ENCODE measurements at regions of chrX and their contacts with region 1.

Region 1: DNA sequence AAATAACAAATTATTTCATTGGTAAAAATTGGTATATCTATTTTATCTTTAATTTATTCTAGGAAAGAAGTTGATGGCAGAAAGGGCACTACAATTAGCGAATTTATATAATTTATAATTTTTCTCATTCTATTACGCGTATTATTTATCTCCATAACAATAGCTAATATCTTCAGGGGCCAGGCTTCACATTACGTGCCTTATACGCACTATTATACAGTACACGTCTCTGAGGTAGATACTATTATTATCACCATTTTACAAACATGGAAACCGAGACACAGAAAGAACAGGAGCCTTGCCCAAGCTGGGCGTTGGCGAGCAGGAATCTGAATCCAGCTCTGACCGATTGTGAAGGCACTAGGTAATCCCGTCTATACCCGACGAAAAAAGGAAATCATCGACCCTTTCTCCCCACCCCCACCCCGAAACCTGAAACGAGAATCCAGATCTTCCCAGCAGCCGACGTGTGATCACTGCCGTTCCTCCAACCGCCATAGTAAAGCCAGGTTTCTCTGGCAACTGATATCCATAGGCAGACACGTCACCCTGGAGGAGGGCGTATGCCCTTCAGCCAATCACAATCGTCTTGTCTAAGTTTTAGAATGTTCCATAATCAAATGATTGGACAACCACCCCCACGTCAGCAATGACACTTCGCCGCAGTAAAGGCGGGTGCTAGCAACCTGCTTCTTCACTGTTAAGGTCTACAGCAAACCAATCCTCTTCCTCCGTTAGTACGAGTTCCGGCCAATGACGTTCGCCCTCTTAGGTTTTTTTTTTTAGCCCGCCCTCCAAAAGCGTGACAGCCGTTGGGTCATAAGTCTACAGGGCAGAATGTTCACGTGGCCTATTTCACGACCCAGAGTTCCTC is at the start of gene MORF4L2:
- DNase-seq: peak; percentile 91 to 96
- H3K4me3 ChIP-seq: peak within 1 kb of the TSS; percentile 63
- H3K4me3 Mint-ChIP-seq: no peak within 1 kb of the TSS
- H3K27ac Mint-ChIP-seq: no peak within 1 kb of the TSS
- H3K4me1 ChIP-seq: no peaks in the 10 kb centered on the region
- H3K4me1 Mint-ChIP-seq: no peaks in the 10 kb centered on the region
- H3K27me3 ChIP-seq: no peaks in the 10 kb centered on the region
- H3K27me3 Mint-ChIP-seq: no peaks in the 10 kb centered on the region
- CTCF ChIP-seq: no peak
- total RNA-seq, gene MORF4L2: 314 and 322 TPM in 2 replicates

Region 2: GRCh38 chrX:103431316-103431715 is 255.1 kb before region 1 on chrX:
- CTCF ChIA-PET with region 1: no interaction called
- POLR2A ChIA-PET with region 1: no interaction called
- intact Hi-C with region 1: no loop called
- DNase-seq: no peak
- H3K4me3 ChIP-seq: no peak overlapping the region
- H3K4me3 Mint-ChIP-seq: no peak overlapping the region
- H3K27ac Mint-ChIP-seq: no peak overlapping the region
- H3K4me1 ChIP-seq: peaks cover 6% of the 10 kb centered on the region; the same call in 1 of the 2 replicates
- H3K4me1 Mint-ChIP-seq: peaks cover 13% of the 10 kb centered on the region
- H3K27me3 ChIP-seq: no peaks in the 10 kb centered on the region
- H3K27me3 Mint-ChIP-seq: no peaks in the 10 kb centered on the region
- CTCF ChIP-seq: no peak

Region 3: GRCh38 chrX:103533511-103534216 is 152.8 kb before region 1 on chrX:
- CTCF ChIA-PET with region 1: no interaction called
- POLR2A ChIA-PET with region 1: interaction called, 4 read pairs
- intact Hi-C with region 1: loop called (anchors 1 kb)
- DNase-seq: peak; percentile 67 to 72
- H3K4me3 ChIP-seq: peak overlapping the region; percentile 11
- H3K4me3 Mint-ChIP-seq: peak overlapping the region; percentile 68
- H3K27ac Mint-ChIP-seq: no peak overlapping the region
- H3K4me1 ChIP-seq: no peaks in the 10 kb centered on the region
- H3K4me1 Mint-ChIP-seq: no peaks in the 10 kb centered on the region
- H3K27me3 ChIP-seq: no peaks in the 10 kb centered on the region
- H3K27me3 Mint-ChIP-seq: no peaks in the 10 kb centered on the region
- CTCF ChIP-seq: peak; percentile 66 to 74

Region 4: DNA sequence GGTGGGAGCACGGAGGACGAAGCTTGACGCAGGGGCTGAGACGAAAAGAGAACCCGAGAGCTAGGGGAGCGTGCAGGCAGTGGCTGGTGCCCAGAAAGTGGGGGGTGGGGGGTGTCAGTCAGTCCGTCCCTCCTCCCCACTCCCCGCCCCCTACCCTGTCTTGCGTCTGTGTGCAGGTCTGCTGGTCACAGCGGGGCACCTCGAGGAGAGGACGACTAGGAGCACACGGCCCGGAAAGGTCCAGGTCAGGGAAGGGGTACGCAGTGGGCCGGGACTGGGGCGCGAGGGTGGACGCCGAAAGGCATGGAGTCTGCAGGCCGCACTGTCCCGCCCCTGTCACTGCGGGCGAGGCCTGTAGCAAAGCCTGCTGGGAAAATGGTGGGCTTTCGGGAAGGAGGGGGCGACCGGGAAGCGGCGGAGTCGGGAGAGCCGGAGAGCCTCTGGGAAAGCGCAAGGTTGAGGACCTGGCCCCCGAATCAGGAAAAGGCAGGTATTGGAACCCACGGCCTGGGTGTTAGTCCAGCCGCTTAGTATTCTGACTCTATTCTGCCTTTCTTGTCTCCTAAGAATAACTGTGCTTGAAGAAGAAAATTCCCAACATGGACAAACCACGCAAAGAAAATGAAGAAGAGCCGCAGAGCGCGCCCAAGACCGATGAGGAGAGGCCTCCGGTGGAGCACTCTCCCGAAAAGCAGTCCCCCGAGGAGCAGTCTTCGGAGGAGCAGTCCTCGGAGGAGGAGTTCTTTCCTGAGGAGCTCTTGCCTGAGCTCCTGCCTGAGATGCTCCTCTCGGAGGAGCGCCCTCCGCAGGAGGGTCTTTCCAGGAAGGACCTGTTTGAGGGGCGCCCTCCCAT is 56.9 kb before region 1 on chrX:
- CTCF ChIA-PET with region 1: interaction called, 3 read pairs
- POLR2A ChIA-PET with region 1: interaction called, 17 read pairs
- intact Hi-C with region 1: loop called (anchors 2 kb)
- DNase-seq: peak; percentile 69 to 71
- H3K4me3 ChIP-seq: peak overlapping the region; percentile 75
- H3K4me3 Mint-ChIP-seq: peak overlapping the region; percentile 92
- H3K27ac Mint-ChIP-seq: peak overlapping the region; percentile 84
- H3K4me1 ChIP-seq: no peaks in the 10 kb centered on the region
- H3K4me1 Mint-ChIP-seq: peaks cover 12% of the 10 kb centered on the region
- H3K27me3 ChIP-seq: no peaks in the 10 kb centered on the region
- H3K27me3 Mint-ChIP-seq: no peaks in the 10 kb centered on the region
- CTCF ChIP-seq: peak in 1 of 2 experiments; percentile 86

Region 5: DNA sequence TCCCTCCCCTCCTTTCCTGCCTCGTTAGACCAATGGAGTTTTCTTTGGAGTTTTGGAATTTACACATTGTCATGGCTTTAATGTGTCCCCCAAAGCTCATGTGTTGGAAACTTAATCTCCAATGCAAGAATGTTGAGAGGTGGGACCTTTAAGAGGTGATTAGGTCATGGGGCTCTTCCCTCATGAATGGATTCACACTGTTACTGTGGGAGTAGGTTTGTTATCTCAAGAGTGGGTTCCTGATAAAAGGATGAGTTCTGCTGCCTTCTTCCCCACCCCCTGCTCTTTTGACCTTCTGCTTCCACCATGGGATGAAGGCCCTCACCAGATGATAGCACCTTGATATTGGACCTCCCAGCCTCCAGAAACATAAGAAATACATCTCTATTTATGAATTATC is 16.7 kb before region 1 on chrX:
- CTCF ChIA-PET with region 1: no interaction called
- POLR2A ChIA-PET with region 1: no interaction called
- intact Hi-C with region 1: no loop called
- DNase-seq: no peak
- H3K4me3 ChIP-seq: no peak overlapping the region
- H3K4me3 Mint-ChIP-seq: no peak overlapping the region
- H3K27ac Mint-ChIP-seq: no peak overlapping the region
- H3K4me1 ChIP-seq: no peaks in the 10 kb centered on the region
- H3K4me1 Mint-ChIP-seq: no peaks in the 10 kb centered on the region
- H3K27me3 ChIP-seq: no peaks in the 10 kb centered on the region
- H3K27me3 Mint-ChIP-seq: no peaks in the 10 kb centered on the region
- CTCF ChIP-seq: no peak

Region 6: DNA sequence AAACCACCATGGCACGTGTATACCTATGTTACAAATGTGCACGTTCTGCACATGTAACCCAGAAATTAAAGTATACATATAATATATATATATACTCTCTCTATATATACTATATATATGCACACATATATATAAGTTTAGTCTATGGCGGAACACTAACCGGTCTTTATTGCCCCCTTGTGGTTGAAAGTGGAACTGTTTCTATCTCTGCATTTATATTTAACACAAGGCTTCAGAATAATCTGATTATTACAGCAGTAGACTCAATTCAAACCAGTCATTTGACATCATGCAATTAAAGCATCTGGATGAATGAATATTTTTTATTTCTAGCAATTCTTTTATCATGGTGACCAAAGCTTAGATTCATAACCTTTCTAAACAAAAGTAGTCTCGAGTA is 131.1 kb after region 1 on chrX:
- CTCF ChIA-PET with region 1: interaction called, 4 read pairs
- POLR2A ChIA-PET with region 1: interaction called, 5 read pairs
- intact Hi-C with region 1: loop called (anchors 1 kb)
- DNase-seq: peak in 1 of 2 experiments; percentile 54
- H3K4me3 ChIP-seq: no peak overlapping the region
- H3K4me3 Mint-ChIP-seq: no peak overlapping the region
- H3K27ac Mint-ChIP-seq: no peak overlapping the region
- H3K4me1 ChIP-seq: peaks cover 8% of the 10 kb centered on the region; the same call in 1 of the 2 replicates
- H3K4me1 Mint-ChIP-seq: peaks cover 8% of the 10 kb centered on the region
- H3K27me3 ChIP-seq: no peaks in the 10 kb centered on the region
- H3K27me3 Mint-ChIP-seq: no peaks in the 10 kb centered on the region
- CTCF ChIP-seq: peak in 1 of 2 experiments; percentile 23

Region 7: GRCh38 chrX:103918581-103919269 is 232.3 kb after region 1 on chrX:
- CTCF ChIA-PET with region 1: no interaction called
- POLR2A ChIA-PET with region 1: interaction called, 3 read pairs
- intact Hi-C with region 1: loop called (anchors 5 kb)
- DNase-seq: peak; percentile 61
- H3K4me3 ChIP-seq: peak overlapping the region; percentile 42
- H3K4me3 Mint-ChIP-seq: peak overlapping the region; percentile 94
- H3K27ac Mint-ChIP-seq: peak overlapping the region; percentile 53
- H3K4me1 ChIP-seq: no peaks in the 10 kb centered on the region; the same call in 1 of the 2 replicates
- H3K4me1 Mint-ChIP-seq: peaks cover 3% of the 10 kb centered on the region
- H3K27me3 ChIP-seq: no peaks in the 10 kb centered on the region
- H3K27me3 Mint-ChIP-seq: no peaks in the 10 kb centered on the region
- CTCF ChIP-seq: no peak

Measured in Caco-2 (cell line).